Heart left ventricle (tissue), 16 donors: ENCODE measurements at regions of chr14 and their contacts with region 1.

Region 1: DNA sequence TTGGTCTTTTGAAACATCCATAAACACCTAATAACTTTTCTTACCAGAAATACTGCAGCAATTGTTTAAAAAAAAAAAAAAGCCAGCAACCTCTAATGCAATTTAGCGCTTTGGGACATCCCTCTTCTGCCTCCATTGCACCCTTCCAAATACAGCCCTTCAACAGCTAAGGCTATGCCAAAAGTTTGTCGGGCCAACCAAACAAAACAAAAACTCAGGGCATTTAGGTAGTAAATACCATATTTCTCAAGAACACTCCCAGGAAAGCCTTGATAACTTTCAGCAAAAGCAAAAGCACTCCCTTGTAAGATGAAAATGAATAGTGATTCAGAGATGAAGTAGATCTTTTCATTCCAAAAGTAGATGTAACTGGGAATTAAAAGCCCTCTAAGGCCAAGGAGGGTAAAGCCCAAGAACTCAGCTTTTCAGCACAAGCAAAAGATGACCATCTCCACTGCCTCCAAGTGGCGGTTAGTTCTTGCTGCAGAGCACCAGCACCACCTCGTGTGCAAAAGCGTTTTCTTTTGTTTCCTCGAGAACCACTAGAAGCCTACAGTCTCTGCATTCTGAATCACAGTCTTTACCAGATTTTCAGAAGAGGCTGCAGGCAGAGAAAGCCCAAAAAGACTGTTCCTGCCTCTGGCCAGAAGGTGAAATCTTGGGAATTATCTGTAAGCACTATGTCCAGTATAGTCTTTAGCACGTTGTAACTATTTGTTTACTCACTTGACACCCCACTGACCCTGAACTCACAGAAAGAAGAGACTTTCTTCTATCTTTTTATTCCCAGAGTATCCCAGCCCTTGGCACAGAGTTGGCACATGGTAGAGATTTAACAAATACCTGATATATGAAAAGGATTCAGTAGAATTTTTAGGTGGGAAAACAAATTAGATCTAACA is 53.1 kb downstream of the SIX6 start:
- DNase-seq: peak in 4 of 5 donors; percentile 13 to 46 (median 36)
- ATAC-seq: peak; percentile 68 to 89 (median 82)
- H3K4me3 ChIP-seq: no peak overlapping the region
- H3K27ac ChIP-seq: no peak overlapping the region
- H3K4me1 ChIP-seq: peaks cover 0 to 6% (median 0%) of the 10 kb centered on the region in 12 donors
- H3K27me3 ChIP-seq: no peaks in the 10 kb centered on the region
- CTCF ChIP-seq: peak; percentile 28 to 73 (median 59)
- POLR2A ChIP-seq: no peak

Region 2: GRCh38 chr14:59964251-59965007 is 597.7 kb before region 1 on chr14:
- intact Hi-C with region 1: loop called in 2 of 10 experiments (anchors 10 kb)
- DNase-seq: no peak
- ATAC-seq: peak in 2 of 4 donors; percentile 14 to 22
- H3K4me3 ChIP-seq: peak overlapping the region in 3 of 12 donors; percentile 19 to 64 (median 45)
- H3K27ac ChIP-seq: no peak overlapping the region
- H3K4me1 ChIP-seq: peaks cover 0 to 4% (median 0%) of the 10 kb centered on the region in 12 donors
- H3K27me3 ChIP-seq: no peaks in the 10 kb centered on the region
- CTCF ChIP-seq: no peak
- POLR2A ChIP-seq: no peak

Region 3: GRCh38 chr14:60184146-60184904 is 377.8 kb before region 1 on chr14:
- intact Hi-C with region 1: loop called in 5 of 10 experiments (anchors 5 kb)
- DNase-seq: no peak
- ATAC-seq: peak in 2 of 4 donors; percentile 52 to 71
- H3K4me3 ChIP-seq: peak overlapping the region in 11 of 12 donors; percentile 21 to 60 (median 47)
- H3K27ac ChIP-seq: peak overlapping the region in 8 of 12 donors; percentile 13 to 52 (median 38)
- H3K4me1 ChIP-seq: peaks cover 0 to 8% (median 0%) of the 10 kb centered on the region in 12 donors
- H3K27me3 ChIP-seq: no peaks in the 10 kb centered on the region
- CTCF ChIP-seq: peak; percentile 58 to 89 (median 78)
- POLR2A ChIP-seq: no peak

Region 4: GRCh38 chr14:60195179-60195810 is 366.8 kb before region 1 on chr14:
- intact Hi-C with region 1: loop called in 6 of 10 experiments (anchors 2 to 10 kb)
- DNase-seq: no peak
- ATAC-seq: peak in 3 of 4 donors; percentile 59 to 71 (median 67)
- H3K4me3 ChIP-seq: no peak overlapping the region
- H3K27ac ChIP-seq: no peak overlapping the region
- H3K4me1 ChIP-seq: no peaks in the 10 kb centered on the region
- H3K27me3 ChIP-seq: no peaks in the 10 kb centered on the region
- CTCF ChIP-seq: peak in 8 of 12 donors; percentile 16 to 45 (median 31)
- POLR2A ChIP-seq: no peak

Region 5: DNA sequence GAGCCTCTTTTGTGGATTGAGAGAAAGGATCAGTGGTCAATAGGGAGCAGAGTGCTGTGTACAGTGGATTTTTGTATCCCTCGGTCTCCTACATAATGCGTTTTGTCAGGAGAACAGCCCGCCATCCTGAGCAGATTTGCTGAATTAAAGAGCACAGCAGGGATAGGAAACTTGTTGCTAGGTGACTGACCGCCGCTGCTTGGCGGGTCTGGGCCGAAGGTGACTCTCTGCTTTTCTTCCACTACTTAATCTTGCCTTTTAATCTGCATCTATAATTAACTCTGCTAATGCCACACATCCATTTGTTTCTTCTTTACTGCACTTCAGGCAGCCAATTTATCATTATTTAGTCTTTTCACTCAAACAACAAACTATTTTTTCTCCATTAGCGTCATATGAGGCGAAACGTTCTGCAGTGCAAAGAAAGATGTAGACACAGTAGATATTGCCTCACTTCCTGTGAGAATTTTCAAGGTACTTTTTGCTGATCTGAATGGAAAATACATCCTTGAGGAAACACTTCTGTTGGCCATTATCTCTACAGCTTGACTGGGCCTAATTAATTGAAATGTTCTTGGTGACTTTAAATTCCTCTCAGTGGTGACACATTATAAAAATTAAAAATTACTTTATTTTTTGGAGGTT is 205.1 kb before region 1 on chr14:
- intact Hi-C with region 1: loop called in 7 of 10 experiments (anchors 5 to 10 kb)
- DNase-seq: no peak
- ATAC-seq: no peak
- H3K4me3 ChIP-seq: no peak overlapping the region
- H3K27ac ChIP-seq: no peak overlapping the region
- H3K4me1 ChIP-seq: no peaks in the 10 kb centered on the region
- H3K27me3 ChIP-seq: peaks cover 0 to 3% (median 0%) of the 10 kb centered on the region in 9 donors
- CTCF ChIP-seq: no peak
- POLR2A ChIP-seq: no peak